ENCODE measurements at regions of chr18 and their contacts with region 1.

Region 1: GRCh38 chr18:23540867-23541266 is 37.6 kb downstream of the RMC1 start:
- DNase-seq: no peak
- ATAC-seq: peak; percentile 49
- H3K4me3 Mint-ChIP-seq: no peak overlapping the region
- H3K27ac Mint-ChIP-seq: peak overlapping the region; percentile 54
- H3K4me1 Mint-ChIP-seq: peaks cover 35% of the 10 kb centered on the region
- H3K27me3 Mint-ChIP-seq: no peaks in the 10 kb centered on the region
- CTCF ChIP-seq: no peak

Region 2: DNA sequence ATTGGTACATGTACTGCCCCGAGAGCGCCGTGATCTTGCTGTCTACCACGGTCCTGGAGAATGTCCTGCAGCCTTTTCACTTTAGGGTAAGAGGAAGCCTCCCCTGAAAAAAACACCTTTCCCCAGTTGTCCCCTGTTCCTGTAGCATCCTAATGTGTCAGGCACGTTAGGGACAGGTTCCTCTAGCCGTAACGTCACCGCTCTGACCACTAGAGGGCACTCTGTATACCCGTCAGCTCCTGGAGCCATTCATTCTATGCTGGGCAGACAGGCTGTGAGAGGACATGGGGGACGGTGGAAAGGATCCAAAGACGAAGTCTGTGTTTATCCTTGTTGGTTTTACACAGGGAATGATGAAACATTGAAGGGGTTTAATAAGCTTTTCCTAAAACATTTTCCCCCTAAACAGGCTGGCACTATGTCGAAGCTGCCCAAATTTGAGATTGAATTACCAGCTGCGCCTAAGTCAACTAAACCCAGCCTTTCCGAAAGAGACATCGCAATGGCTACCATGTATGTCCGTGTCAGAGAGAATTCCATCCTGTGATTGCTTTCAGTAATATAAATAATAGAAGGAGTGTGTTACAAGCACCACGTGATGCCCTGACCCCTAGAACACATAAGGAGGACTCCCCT is 24.8 kb before region 1 on chr18:
- CTCF ChIA-PET with region 1: interaction called, 10 read pairs
- POLR2A ChIA-PET with region 1: no interaction called
- intact Hi-C with region 1: no loop called
- DNase-seq: peak; percentile 42
- ATAC-seq: peak; percentile 97
- H3K4me3 Mint-ChIP-seq: no peak overlapping the region
- H3K27ac Mint-ChIP-seq: peak overlapping the region; percentile 74
- H3K4me1 Mint-ChIP-seq: peaks cover 35% of the 10 kb centered on the region
- H3K27me3 Mint-ChIP-seq: no peaks in the 10 kb centered on the region
- CTCF ChIP-seq: peak; percentile 78

Region 3: GRCh38 chr18:23523429-23524220 is 17.2 kb before region 1 on chr18:
- CTCF ChIA-PET with region 1: interaction called, 3 read pairs
- POLR2A ChIA-PET with region 1: interaction called, 3 read pairs
- intact Hi-C with region 1: loop called (anchors 2 kb)
- DNase-seq: no peak
- ATAC-seq: peak; percentile 75
- H3K4me3 Mint-ChIP-seq: no peak overlapping the region
- H3K27ac Mint-ChIP-seq: peak overlapping the region; percentile 38
- H3K4me1 Mint-ChIP-seq: peaks cover 15% of the 10 kb centered on the region
- H3K27me3 Mint-ChIP-seq: no peaks in the 10 kb centered on the region
- CTCF ChIP-seq: no peak

Region 4: GRCh38 chr18:23573626-23574431 is 33.0 kb after region 1 on chr18:
- CTCF ChIA-PET with region 1: no interaction called
- POLR2A ChIA-PET with region 1: no interaction called
- intact Hi-C with region 1: no loop called
- DNase-seq: no peak
- ATAC-seq: no peak
- H3K4me3 Mint-ChIP-seq: no peak overlapping the region
- H3K27ac Mint-ChIP-seq: no peak overlapping the region
- H3K4me1 Mint-ChIP-seq: peaks cover 24% of the 10 kb centered on the region
- H3K27me3 Mint-ChIP-seq: no peaks in the 10 kb centered on the region
- CTCF ChIP-seq: no peak